ENCODE measurements at regions of chr12 and their contacts with region 1.

Region 1: GRCh38 chr12:43805860-43806736 is at the start of gene TWF1:
- DNase-seq: peak; percentile 75
- H3K4me3 Mint-ChIP-seq: peak within 1 kb of the TSS; percentile 86
- H3K27ac Mint-ChIP-seq: peak within 1 kb of the TSS; percentile 98
- H3K4me1 Mint-ChIP-seq: peaks cover 7% of the 10 kb centered on the region
- H3K27me3 Mint-ChIP-seq: no peaks in the 10 kb centered on the region
- CTCF ChIP-seq: peak; percentile 28
- total RNA-seq, gene TWF1: 104 and 105 TPM in 2 replicates

Region 2: GRCh38 chr12:43723134-43723533 is 83.0 kb before region 1 on chr12:
- CTCF ChIA-PET with region 1: no interaction called
- POLR2A ChIA-PET with region 1: no interaction called
- intact Hi-C with region 1: no loop called
- DNase-seq: no peak
- H3K4me3 Mint-ChIP-seq: no peak overlapping the region
- H3K27ac Mint-ChIP-seq: no peak overlapping the region
- H3K4me1 Mint-ChIP-seq: no peaks in the 10 kb centered on the region
- H3K27me3 Mint-ChIP-seq: no peaks in the 10 kb centered on the region
- CTCF ChIP-seq: no peak

Region 3: GRCh38 chr12:43758728-43759563 is 47.2 kb before region 1 on chr12 and contains the starts of genes IRAK4 and PUS7L:
- CTCF ChIA-PET with region 1: interaction called, 5 read pairs
- POLR2A ChIA-PET with region 1: interaction called, 44 read pairs
- intact Hi-C with region 1: loop called (anchors 2 kb)
- DNase-seq: peak; percentile 98
- H3K4me3 Mint-ChIP-seq: peak within 1 kb of the TSS; percentile 87
- H3K27ac Mint-ChIP-seq: peak within 1 kb of the TSS; percentile 84
- H3K4me1 Mint-ChIP-seq: peaks cover 30% of the 10 kb centered on the region
- H3K27me3 Mint-ChIP-seq: no peaks in the 10 kb centered on the region
- CTCF ChIP-seq: peak; percentile 27
- total RNA-seq, gene IRAK4: 10.1 and 12.2 TPM in 2 replicates
- total RNA-seq, gene PUS7L: 15.9 and 26.5 TPM in 2 replicates

Region 4: GRCh38 chr12:43789941-43790340 is 16.2 kb before region 1 on chr12:
- CTCF ChIA-PET with region 1: interaction called, 5 read pairs
- POLR2A ChIA-PET with region 1: interaction called, 14 read pairs
- intact Hi-C with region 1: no loop called
- DNase-seq: peak; percentile 10
- H3K4me3 Mint-ChIP-seq: no peak overlapping the region
- H3K27ac Mint-ChIP-seq: peak overlapping the region; percentile 49
- H3K4me1 Mint-ChIP-seq: no peaks in the 10 kb centered on the region
- H3K27me3 Mint-ChIP-seq: no peaks in the 10 kb centered on the region
- CTCF ChIP-seq: no peak

Region 5: GRCh38 chr12:43835656-43836474 is 29.8 kb after region 1 on chr12 and contains the start of gene TMEM117:
- CTCF ChIA-PET with region 1: interaction called, 7 read pairs
- POLR2A ChIA-PET with region 1: interaction called, 152 read pairs
- intact Hi-C with region 1: loop called (anchors 1 kb)
- DNase-seq: peak; percentile 51
- H3K4me3 Mint-ChIP-seq: peak within 1 kb of the TSS; percentile 59
- H3K27ac Mint-ChIP-seq: peak within 1 kb of the TSS; percentile 21
- H3K4me1 Mint-ChIP-seq: peaks cover 15% of the 10 kb centered on the region
- H3K27me3 Mint-ChIP-seq: no peaks in the 10 kb centered on the region
- CTCF ChIP-seq: no peak
- total RNA-seq, gene TMEM117: 3.2 and 4.3 TPM in 2 replicates

Region 6: DNA sequence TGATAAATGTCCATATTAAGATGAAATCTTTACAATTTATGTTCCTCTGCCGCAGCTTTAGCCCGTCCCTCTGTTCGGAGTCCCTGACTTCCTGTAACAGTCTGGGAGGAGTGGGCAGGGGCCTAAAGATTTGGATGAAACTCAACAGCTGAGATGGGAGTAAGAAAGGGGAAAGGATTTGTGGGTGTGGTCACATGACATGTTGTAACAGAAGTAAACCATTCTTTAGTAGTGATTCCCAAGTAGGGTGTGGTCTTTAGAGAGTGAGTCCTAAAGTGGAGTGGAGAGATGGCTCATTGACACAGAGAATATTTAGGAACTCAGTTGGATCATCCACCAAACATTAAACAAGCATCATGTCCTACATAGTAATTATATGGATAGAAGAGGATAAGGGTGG is 42.7 kb after region 1 on chr12:
- CTCF ChIA-PET with region 1: interaction called, 3 read pairs
- POLR2A ChIA-PET with region 1: interaction called, 15 read pairs
- intact Hi-C with region 1: no loop called
- DNase-seq: no peak
- H3K4me3 Mint-ChIP-seq: no peak overlapping the region
- H3K27ac Mint-ChIP-seq: no peak overlapping the region
- H3K4me1 Mint-ChIP-seq: peaks cover 26% of the 10 kb centered on the region
- H3K27me3 Mint-ChIP-seq: no peaks in the 10 kb centered on the region
- CTCF ChIP-seq: no peak

Measured in MCF 10A (cell line).